ENCODE measurements at regions of chr2 and their contacts with region 1.

Region 1: GRCh38 chr2:172804423-172804822 is 68.8 kb downstream of the RAPGEF4 start:
- DNase-seq: no peak
- H3K4me3 ChIP-seq: no peak overlapping the region
- H3K27ac ChIP-seq: no peak overlapping the region
- H3K4me1 ChIP-seq: no peaks in the 10 kb centered on the region
- H3K27me3 ChIP-seq: no peaks in the 10 kb centered on the region
- CTCF ChIP-seq: no peak
- EP300 ChIP-seq: no peak
- POLR2A ChIP-seq: no peak

Region 2: GRCh38 chr2:172938713-172939375 is 134.4 kb after region 1 on chr2:
- intact Hi-C with region 1: loop called (anchors 5 kb)
- DNase-seq: no peak
- H3K4me3 ChIP-seq: no peak overlapping the region
- H3K27ac ChIP-seq: no peak overlapping the region
- H3K4me1 ChIP-seq: no peaks in the 10 kb centered on the region
- H3K27me3 ChIP-seq: peaks cover 0 to 6% (median 0%) of the 10 kb centered on the region in 3 donors
- CTCF ChIP-seq: no peak
- EP300 ChIP-seq: no peak
- POLR2A ChIP-seq: no peak

Measured in stomach (tissue), 19 donors.